Activated CD4-positive, alpha-beta T cell treated with anti-CD3 and anti-CD28 coated beads for 36 hours (primary cell): ENCODE measurements at regions of chrX and their contacts with region 1.

Region 1: GRCh38 chrX:40792433-40792832 is 57.1 kb upstream of the MED14 start:
- DNase-seq: no peak
- ATAC-seq: no peak
- H3K4me3 Mint-ChIP-seq: no peak overlapping the region
- H3K27ac Mint-ChIP-seq: no peak overlapping the region
- H3K4me1 Mint-ChIP-seq: peaks cover 2% of the 10 kb centered on the region
- H3K27me3 Mint-ChIP-seq: no peaks in the 10 kb centered on the region

Region 2: DNA sequence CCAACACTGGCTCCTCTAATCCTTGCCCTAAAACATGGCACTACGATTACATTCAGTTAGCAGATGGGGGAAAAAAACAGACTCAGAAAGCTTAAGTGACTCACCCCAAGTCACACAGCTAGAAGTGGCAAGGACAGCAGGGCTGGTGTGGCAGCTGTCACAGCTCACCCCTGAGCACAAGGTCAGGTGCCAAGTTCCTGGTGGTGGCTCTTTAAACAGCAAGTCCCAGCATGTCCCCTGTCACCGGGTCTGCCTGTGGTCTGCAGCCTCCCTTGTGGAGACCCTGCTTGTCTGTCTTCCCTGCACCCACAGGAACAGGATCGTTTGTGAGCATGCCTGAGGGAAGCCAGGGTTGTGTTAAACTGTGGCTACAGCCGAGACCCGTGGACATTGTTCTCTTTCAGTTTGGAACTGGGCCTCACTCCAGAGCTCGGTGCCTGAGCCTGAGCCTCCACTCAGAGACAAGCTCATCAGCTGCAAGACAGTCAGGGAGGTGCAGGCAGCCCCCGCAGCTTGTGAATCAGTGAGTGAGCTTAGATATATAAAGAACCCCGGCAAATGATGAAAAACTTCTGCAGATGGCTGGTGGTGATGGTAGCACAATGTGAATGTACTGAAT is 955.5 kb before region 1 on chrX:
- CTCF ChIA-PET with region 1: no interaction called
- POLR2A ChIA-PET with region 1: no interaction called
- intact Hi-C with region 1: no loop called
- DNase-seq: peak; percentile 27
- ATAC-seq: peak; percentile 77
- H3K4me3 Mint-ChIP-seq: no peak overlapping the region
- H3K27ac Mint-ChIP-seq: no peak overlapping the region
- H3K4me1 Mint-ChIP-seq: peaks cover 4% of the 10 kb centered on the region
- H3K27me3 Mint-ChIP-seq: no peaks in the 10 kb centered on the region

Region 3: DNA sequence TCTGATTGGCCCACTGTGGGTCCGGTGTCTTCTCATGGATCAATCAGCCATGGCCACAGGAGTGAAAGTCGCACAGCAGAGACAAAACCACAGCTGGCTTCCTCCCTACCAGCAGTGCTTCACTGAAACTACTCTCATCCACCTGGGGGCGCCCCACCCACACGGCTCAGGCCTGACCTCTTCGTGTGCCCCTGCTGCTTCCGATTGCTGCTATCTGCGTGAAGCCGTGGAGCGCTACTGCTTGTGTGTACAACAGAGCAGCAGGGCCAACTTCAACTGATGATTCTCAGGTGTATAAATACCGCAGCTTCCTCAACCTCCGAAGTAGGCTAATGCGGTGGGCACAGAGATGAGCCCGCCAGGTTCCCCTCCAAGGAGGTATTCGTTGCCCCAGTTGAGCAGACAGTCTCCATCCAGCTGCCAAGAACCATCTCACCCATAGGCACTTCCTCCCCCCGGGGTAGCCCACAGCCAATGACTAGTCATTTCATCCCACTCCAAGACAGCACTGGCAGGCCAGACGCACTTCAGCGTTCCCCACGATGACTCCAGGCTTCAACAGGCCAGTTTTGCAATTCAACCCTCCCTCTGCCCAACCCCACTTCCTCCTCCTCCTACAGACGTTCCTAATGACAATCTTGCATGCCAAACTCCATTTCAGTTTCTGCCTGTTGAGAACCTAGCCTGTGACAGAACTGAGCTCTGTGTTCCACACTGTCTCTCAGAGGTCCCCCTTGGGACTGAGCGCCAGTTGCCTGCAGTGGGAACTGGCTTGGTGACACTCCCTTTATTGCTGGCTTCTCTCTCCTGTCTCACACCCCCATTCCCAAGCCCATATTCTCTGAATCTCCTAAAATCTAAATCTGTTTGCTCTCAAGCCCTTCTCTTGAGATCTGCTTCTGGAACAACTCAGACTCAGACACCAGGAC is 253.0 kb before region 1 on chrX:
- CTCF ChIA-PET with region 1: interaction called, 8 read pairs
- POLR2A ChIA-PET with region 1: no interaction called
- intact Hi-C with region 1: loop called (anchors 1 to 5 kb)
- DNase-seq: peak; percentile 86
- ATAC-seq: peak; percentile 91
- H3K4me3 Mint-ChIP-seq: no peak overlapping the region
- H3K27ac Mint-ChIP-seq: peak overlapping the region; percentile 69
- H3K4me1 Mint-ChIP-seq: peaks cover 20% of the 10 kb centered on the region
- H3K27me3 Mint-ChIP-seq: no peaks in the 10 kb centered on the region

Region 4: DNA sequence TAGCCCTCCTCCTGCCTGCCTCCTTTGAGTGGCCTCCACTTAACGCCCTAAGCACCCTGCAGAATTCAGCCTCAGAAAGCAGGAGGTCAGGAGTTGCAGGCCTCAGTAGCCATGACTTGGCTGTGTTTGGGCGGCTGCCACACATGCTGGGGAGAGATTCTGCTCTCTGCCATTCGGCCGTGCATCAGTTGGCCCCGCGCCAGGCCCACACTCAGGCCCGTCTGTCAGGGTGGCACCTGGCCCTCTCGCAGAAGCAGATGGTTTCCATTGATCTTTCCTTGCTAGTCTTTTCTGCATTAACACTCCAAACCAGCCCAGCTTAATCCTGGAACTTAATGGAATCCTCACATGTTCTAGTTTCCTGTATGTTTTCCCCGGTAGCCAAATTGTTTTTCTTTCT is 242.4 kb before region 1 on chrX:
- CTCF ChIA-PET with region 1: no interaction called
- POLR2A ChIA-PET with region 1: no interaction called
- intact Hi-C with region 1: no loop called
- DNase-seq: no peak
- ATAC-seq: no peak
- H3K4me3 Mint-ChIP-seq: no peak overlapping the region
- H3K27ac Mint-ChIP-seq: no peak overlapping the region
- H3K4me1 Mint-ChIP-seq: no peaks in the 10 kb centered on the region
- H3K27me3 Mint-ChIP-seq: no peaks in the 10 kb centered on the region

Region 5: GRCh38 chrX:40887476-40887875 is 95.0 kb after region 1 on chrX:
- CTCF ChIA-PET with region 1: no interaction called
- POLR2A ChIA-PET with region 1: no interaction called
- intact Hi-C with region 1: no loop called
- DNase-seq: no peak
- ATAC-seq: no peak
- H3K4me3 Mint-ChIP-seq: no peak overlapping the region
- H3K27ac Mint-ChIP-seq: no peak overlapping the region
- H3K4me1 Mint-ChIP-seq: peaks cover 3% of the 10 kb centered on the region
- H3K27me3 Mint-ChIP-seq: no peaks in the 10 kb centered on the region

Region 6: DNA sequence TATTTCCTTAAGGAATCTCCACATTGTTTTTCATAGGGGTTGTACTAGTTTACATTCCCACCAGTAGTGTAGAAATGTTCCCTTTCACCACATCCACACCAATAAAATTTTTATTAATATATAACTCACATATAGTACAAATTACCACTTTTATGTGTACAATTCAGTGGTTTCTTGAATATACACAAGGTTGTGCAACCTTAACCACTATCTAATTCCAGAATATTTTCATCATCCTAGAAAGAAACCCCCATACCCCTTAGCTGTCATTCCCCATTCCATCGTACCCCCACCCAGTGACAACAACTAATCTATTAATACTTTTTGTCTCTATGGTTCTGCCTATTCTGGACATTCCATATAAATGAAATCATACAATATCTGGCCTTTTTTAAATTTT is 184.5 kb after region 1 on chrX:
- CTCF ChIA-PET with region 1: no interaction called
- POLR2A ChIA-PET with region 1: no interaction called
- intact Hi-C with region 1: no loop called
- DNase-seq: no peak
- ATAC-seq: no peak
- H3K4me3 Mint-ChIP-seq: no peak overlapping the region
- H3K27ac Mint-ChIP-seq: no peak overlapping the region
- H3K4me1 Mint-ChIP-seq: peaks cover 6% of the 10 kb centered on the region
- H3K27me3 Mint-ChIP-seq: no peaks in the 10 kb centered on the region